Adrenal gland (tissue), 19 donors: ENCODE measurements at regions of chr22 and their contacts with region 1.

Region 1: GRCh38 chr22:32796865-32797573 is 4.5 kb upstream of the TIMP3 start:
- DNase-seq: peak in 6 of 7 donors; percentile 62 to 83 (median 65)
- H3K4me3 ChIP-seq: no peak overlapping the region
- H3K27ac ChIP-seq: no peak overlapping the region
- H3K4me1 ChIP-seq: no peaks in the 10 kb centered on the region
- H3K27me3 ChIP-seq: no peaks in the 10 kb centered on the region
- CTCF ChIP-seq: peak; percentile 64 to 83 (median 80)
- POLR2A ChIP-seq: no peak

Region 2: DNA sequence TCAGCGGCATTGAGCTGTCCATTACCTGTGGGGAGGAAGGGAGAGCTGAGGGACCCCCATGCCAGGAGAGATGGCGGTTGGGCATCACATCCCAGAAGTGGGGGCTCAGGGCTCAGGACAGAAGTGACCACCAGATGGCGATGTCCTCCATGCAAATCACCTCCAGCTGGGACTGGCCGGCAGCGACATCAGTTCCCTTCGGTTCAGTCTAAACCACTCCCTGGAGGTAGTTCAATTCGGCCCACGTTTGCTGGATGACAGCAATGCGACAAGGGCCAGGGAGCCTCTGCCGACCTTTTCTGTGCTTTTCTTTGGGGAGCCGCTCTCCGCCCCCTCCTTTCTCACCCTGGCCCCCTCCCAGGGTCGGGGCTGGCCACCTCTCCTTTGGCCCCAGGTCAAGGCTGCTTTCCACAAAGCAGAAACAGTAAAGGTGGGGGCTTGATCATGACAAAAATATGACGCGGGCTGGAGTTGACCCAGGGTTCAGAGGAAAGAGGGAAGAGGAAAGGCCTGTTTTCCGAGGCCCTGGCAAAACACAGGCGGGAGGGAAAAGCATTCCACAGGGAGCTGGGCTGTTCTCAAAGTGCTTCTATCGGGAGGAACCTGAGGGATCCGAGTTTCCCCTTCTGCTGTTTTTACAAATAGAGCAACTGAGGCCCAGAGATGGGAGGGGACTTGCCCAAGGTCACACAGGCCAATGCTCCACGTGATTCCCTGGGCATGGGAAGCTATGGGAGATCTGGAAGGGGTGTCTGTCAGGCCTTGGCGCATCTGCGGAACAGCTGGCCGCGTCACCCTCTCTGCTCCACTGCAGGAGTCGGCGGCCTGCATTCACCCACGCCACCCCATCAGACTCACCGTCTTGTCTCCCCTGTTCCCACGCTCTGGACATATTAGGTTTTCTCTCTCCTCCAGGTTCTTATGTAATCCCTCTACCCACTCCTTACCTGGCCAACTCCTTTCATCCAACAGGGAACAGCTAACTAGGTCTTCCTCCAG is 267.7 kb before region 1 on chr22:
- intact Hi-C with region 1: loop called (anchors 5 kb)
- DNase-seq: peak; percentile 82 to 95 (median 90)
- H3K4me3 ChIP-seq: no peak overlapping the region
- H3K27ac ChIP-seq: peak overlapping the region in 4 of 5 donors; percentile 6 to 85 (median 34)
- H3K4me1 ChIP-seq: peaks cover 0 to 18% of the 10 kb centered on the region in 2 donors
- H3K27me3 ChIP-seq: no peaks in the 10 kb centered on the region
- CTCF ChIP-seq: peak; percentile 81 to 94 (median 88)
- POLR2A ChIP-seq: no peak

Region 3: GRCh38 chr22:32655068-32655467 is 142.0 kb before region 1 on chr22:
- intact Hi-C with region 1: loop called (anchors 2 to 5 kb)
- DNase-seq: no peak
- H3K4me3 ChIP-seq: no peak overlapping the region
- H3K27ac ChIP-seq: no peak overlapping the region
- H3K4me1 ChIP-seq: no peaks in the 10 kb centered on the region
- H3K27me3 ChIP-seq: no peaks in the 10 kb centered on the region
- CTCF ChIP-seq: no peak
- POLR2A ChIP-seq: no peak

Region 4: DNA sequence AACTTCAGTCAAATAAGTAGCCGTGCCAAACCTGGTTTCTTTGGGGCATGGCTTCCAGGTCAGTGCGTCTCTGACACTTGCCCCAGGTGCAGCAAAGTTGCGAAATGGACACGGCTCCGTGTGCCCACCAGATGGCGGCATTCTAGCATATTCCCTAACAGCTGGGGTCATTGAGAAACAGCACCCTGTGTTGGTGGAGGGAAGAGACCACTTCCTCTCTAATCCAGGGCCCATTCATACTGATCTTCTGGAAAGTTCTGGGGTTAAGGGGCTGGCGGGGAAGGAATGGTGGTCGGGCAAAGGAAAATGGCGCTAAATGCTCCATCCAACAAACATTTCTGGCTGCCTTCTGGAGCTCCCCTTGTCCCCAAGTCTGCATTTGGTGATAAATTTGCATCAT is 136.7 kb before region 1 on chr22:
- intact Hi-C with region 1: loop called (anchors 2 to 5 kb)
- DNase-seq: peak; percentile 57 to 85 (median 72)
- H3K4me3 ChIP-seq: no peak overlapping the region
- H3K27ac ChIP-seq: no peak overlapping the region
- H3K4me1 ChIP-seq: no peaks in the 10 kb centered on the region
- H3K27me3 ChIP-seq: no peaks in the 10 kb centered on the region
- CTCF ChIP-seq: peak; percentile 48 to 87 (median 73)
- POLR2A ChIP-seq: no peak

Region 5: GRCh38 chr22:32764330-32765131 is 32.5 kb before region 1 on chr22:
- intact Hi-C with region 1: no loop called
- DNase-seq: peak in 5 of 7 donors; percentile 5 to 60 (median 30)
- H3K4me3 ChIP-seq: no peak overlapping the region
- H3K27ac ChIP-seq: peak overlapping the region in 3 of 5 donors; percentile 38 to 88 (median 67)
- H3K4me1 ChIP-seq: peaks cover 0 to 4% of the 10 kb centered on the region in 2 donors
- H3K27me3 ChIP-seq: no peaks in the 10 kb centered on the region
- CTCF ChIP-seq: no peak
- POLR2A ChIP-seq: no peak

Region 6: DNA sequence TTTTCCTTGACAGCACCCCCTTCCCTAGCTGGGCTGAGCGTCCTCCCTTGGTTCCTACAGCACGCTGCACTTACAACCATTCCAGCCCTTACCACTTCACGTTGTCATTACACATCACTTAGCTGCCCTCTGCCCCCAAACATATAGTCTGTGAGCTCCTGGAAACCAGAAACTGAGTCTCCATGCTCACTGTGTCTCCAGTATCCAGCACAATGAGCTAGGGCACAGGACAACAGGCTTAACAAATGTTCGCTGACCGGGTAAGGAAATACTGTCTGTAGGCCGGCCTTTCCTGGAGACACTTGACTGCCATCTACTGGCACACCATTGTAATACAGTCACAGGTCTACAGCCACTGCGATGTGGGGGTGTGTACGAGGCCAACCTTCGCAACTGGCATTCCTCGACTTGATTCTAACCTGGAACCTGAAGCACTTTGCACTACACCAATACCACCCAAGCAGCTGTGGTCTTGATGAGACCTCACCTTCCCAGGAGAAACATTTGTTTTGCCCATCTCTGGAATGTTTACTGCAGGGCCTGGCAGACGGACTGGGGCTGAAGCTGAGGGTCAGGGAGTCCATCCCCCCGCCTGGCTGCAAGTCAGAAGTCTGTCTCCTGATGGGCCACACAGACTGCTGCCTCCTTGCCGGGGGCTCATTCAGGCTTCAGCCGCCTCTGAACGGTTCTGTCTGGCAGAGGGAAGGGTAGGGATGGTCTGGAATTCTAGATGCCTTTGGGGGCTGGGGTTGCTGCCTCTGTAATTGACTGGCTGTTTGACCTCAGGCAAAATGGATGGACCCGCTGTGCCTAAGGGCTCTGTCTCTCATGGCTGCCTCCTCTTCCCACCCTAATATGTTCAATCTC is 189.1 kb after region 1 on chr22:
- intact Hi-C with region 1: loop called (anchors 10 kb)
- DNase-seq: peak; percentile 82 to 93 (median 85)
- H3K4me3 ChIP-seq: no peak overlapping the region
- H3K27ac ChIP-seq: peak overlapping the region in 2 of 5 donors; percentile 28 to 66
- H3K4me1 ChIP-seq: peaks cover 0 to 21% of the 10 kb centered on the region in 2 donors
- H3K27me3 ChIP-seq: no peaks in the 10 kb centered on the region
- CTCF ChIP-seq: peak; percentile 82 to 94 (median 89)
- POLR2A ChIP-seq: no peak